ENCODE measurements at regions of chr2 and their contacts with region 1.

Region 1: GRCh38 chr2:95375532-95376150 is 26.9 kb upstream of the FAHD2A start:
- DNase-seq: no peak
- ATAC-seq: no peak
- H3K4me3 ChIP-seq: no peak overlapping the region
- H3K27ac ChIP-seq: no peak overlapping the region
- H3K4me1 ChIP-seq: no peaks in the 10 kb centered on the region
- H3K27me3 ChIP-seq: peaks cover 23 to 67% of the 10 kb centered on the region in 2 experiments; a peak in 4 of 5 replicates
- CTCF ChIP-seq: no peak
- EP300 ChIP-seq: no peak
- POLR2A ChIP-seq: no peak
- RAD21 ChIP-seq: no peak

Region 2: GRCh38 chr2:95350774-95351597 is 24.7 kb before region 1 on chr2:
- CTCF ChIA-PET with region 1: no interaction called
- POLR2A ChIA-PET with region 1: no interaction called
- in situ Hi-C with region 1: no loop called
- intact Hi-C with region 1: loop called (anchors 2 kb)
- DNase-seq: no peak
- ATAC-seq: no peak
- H3K4me3 ChIP-seq: no peak overlapping the region
- H3K27ac ChIP-seq: no peak overlapping the region
- H3K4me1 ChIP-seq: peaks cover 0 to 12% of the 10 kb centered on the region in 2 experiments; a peak in 2 of 5 replicates
- H3K27me3 ChIP-seq: peaks cover 4 to 71% of the 10 kb centered on the region in 2 experiments; a peak in 4 of 5 replicates
- CTCF ChIP-seq: no peak
- EP300 ChIP-seq: no peak
- POLR2A ChIP-seq: no peak
- RAD21 ChIP-seq: no peak